Transverse colon (tissue), 4 donors: ENCODE measurements at regions of chr2 and their contacts with region 1.

Region 1: DNA sequence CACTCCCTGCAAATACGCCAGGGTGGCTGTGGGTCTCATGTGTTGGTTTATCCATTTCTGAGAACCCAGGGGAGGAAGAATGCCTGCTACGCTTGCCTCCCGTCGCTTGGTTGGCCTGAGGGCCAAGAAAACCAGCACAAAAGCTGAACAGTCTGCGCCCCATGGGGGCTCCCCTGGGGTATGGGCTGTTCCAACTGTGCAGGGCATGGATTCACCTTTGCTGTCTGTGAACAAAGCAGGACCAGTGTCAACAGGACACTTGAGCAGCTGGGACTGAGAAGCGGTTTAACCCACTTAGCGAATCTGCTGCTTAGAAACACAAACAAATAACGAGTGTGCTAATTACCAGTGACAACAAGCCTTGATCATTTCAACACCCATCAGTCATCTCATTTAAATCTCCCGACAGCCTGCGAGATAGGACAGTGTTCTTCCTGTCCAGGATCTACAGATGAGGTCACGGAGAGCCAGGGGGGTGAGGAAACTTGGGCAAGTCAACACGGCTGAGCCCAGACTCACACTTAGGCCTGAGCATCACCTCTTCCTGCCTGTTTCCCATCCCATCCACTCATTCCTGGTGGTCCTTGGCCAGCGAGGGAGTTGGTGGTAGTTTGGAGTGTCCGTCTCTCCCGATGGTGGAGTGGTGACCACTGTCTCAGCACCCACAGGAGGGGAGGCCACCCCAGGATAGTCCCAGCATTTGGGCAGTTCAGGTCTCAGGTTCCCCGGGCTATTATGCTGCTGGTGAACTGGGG is 111.6 kb upstream of the HAAO start:
- DNase-seq: no peak
- H3K4me3 ChIP-seq: no peak overlapping the region
- H3K27ac ChIP-seq: peak overlapping the region in 2 of 4 donors; percentile 25 to 79
- H3K4me1 ChIP-seq: peaks cover 21 to 38% (median 33%) of the 10 kb centered on the region in 4 donors
- H3K27me3 ChIP-seq: no peaks in the 10 kb centered on the region
- CTCF ChIP-seq: no peak
- EP300 ChIP-seq: no peak
- POLR2A ChIP-seq: no peak

Region 2: DNA sequence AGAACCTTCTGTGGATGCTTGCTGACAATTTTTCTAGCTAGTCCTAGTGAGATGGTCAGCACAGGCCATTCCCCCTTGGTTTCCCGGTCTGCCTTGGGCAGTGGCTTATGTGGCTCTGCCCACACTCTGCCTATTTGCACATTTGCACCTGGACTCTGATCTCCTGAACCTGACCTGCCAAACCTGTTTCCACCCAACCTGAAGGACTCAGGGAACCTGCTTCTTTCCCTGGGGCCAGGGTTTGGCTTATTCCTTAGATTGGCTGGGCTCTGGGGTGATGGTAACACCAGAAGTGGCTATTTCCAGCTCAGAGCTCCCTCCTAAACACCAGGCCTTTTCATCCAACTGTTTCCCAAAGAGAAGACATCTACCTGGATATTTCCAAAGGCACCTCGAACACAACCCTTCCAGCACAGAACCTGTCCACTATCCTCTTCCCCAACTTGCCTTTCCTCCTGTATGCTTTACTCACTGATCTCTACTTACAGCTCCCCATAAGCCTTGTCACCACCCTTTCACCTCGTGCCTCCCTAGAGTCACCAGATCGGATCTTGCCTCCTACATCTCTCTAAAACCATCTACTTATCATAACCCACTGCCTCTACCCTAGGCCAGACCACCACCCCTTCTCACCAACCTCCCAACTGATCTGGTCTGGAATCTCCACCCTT is 341.4 kb before region 1 on chr2:
- in situ Hi-C with region 1: no loop called
- intact Hi-C with region 1: loop called (anchors 5 kb)
- DNase-seq: peak; percentile 83
- H3K4me3 ChIP-seq: no peak overlapping the region
- H3K27ac ChIP-seq: peak overlapping the region; percentile 59 to 74 (median 69)
- H3K4me1 ChIP-seq: peaks cover 8 to 50% (median 24%) of the 10 kb centered on the region in 4 donors
- H3K27me3 ChIP-seq: no peaks in the 10 kb centered on the region
- CTCF ChIP-seq: no peak
- EP300 ChIP-seq: no peak
- POLR2A ChIP-seq: no peak

Region 3: GRCh38 chr2:42696987-42697386 is 207.0 kb before region 1 on chr2:
- in situ Hi-C with region 1: no loop called
- intact Hi-C with region 1: no loop called
- DNase-seq: no peak
- H3K4me3 ChIP-seq: no peak overlapping the region
- H3K27ac ChIP-seq: no peak overlapping the region
- H3K4me1 ChIP-seq: no peaks in the 10 kb centered on the region
- H3K27me3 ChIP-seq: no peaks in the 10 kb centered on the region
- CTCF ChIP-seq: no peak
- EP300 ChIP-seq: no peak
- POLR2A ChIP-seq: no peak

Region 4: DNA sequence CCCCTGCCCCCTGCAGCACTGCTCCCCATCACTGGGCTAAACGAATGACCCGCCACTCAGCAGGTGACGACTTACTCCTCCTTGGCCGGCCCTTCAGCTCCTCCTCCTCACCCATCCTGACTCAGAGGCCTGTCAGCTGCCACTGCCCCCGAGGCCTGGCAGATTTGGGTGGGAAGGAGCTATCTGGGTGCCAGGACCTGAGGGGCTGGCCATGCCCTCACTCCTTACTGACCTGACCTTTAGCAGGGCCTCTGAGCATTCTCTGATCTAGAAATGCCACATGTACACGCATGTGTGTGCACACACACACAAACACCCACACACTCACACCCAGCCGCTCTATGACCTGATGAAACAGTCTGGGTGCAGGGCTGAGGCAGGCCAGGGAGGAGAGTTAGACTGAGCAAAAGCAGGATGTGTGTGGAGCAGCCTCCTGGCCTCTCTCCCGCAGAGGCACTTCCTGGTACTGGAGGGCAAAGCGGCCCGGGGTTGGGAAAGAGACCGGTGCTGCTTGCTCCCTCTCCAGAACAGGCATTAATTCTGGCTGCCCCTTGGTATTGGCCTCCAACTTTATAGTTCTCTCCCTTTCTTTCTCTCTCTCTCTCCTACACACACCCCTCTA is 254.4 kb after region 1 on chr2:
- in situ Hi-C with region 1: no loop called
- intact Hi-C with region 1: no loop called
- DNase-seq: peak; percentile 85
- H3K4me3 ChIP-seq: no peak overlapping the region
- H3K27ac ChIP-seq: peak overlapping the region; percentile 93 to 95 (median 94)
- H3K4me1 ChIP-seq: peaks cover 26 to 73% (median 59%) of the 10 kb centered on the region in 4 donors
- H3K27me3 ChIP-seq: no peaks in the 10 kb centered on the region
- CTCF ChIP-seq: no peak
- EP300 ChIP-seq: no peak
- POLR2A ChIP-seq: no peak